Activated CD8-positive, alpha-beta T cell treated with anti-CD3 and anti-CD28 coated beads for 36 hours (primary cell): ENCODE measurements at regions of chr12 and their contacts with region 1.

Region 1: DNA sequence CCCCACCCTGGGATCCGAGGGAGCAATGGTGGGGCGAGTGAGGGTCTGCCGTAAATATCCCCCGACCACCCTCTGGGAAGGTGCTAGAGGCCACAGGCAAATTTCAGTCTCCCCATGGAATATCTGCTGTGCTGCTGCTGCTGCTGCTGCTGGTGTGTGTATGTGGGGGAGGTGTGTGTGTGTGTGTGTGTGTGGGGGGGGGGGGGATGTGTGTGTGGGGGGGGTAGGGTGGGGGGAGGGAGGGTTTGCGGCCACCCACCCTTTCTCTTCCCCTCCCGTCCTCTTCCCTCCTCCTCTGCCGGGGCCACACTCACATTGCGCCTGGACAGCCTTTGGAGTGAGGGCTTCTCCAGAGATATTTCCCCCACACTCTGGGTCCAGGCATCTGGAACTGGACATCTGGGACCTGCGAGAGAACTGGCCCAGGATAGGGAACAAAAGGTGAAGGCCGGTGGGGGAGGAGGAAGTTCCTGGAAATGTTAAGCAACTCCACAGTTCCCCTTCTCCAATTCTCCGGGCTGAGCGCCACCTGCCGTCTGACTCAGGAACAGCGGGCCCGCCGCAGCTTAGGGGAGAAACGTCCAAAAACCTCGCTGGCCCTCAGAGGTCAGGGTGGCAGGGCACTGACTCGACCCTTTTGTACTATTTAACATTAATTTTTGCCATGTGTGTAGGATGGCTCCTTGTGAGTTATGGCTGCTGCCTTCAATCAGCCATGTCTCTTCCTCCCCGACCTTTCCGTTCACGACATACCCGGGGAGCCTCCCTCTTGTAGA is at the start of gene C1RL:
- DNase-seq: peak; percentile 87
- ATAC-seq: peak; percentile 47
- H3K4me3 Mint-ChIP-seq: peak within 1 kb of the TSS; percentile 88
- H3K27ac Mint-ChIP-seq: peak within 1 kb of the TSS; percentile 93
- H3K4me1 Mint-ChIP-seq: peaks cover 36% of the 10 kb centered on the region
- H3K27me3 Mint-ChIP-seq: no peaks in the 10 kb centered on the region
- CTCF ChIP-seq: peak; percentile 97
- total RNA-seq, gene C1RL: 10.5 to 11.8 TPM

Region 2: DNA sequence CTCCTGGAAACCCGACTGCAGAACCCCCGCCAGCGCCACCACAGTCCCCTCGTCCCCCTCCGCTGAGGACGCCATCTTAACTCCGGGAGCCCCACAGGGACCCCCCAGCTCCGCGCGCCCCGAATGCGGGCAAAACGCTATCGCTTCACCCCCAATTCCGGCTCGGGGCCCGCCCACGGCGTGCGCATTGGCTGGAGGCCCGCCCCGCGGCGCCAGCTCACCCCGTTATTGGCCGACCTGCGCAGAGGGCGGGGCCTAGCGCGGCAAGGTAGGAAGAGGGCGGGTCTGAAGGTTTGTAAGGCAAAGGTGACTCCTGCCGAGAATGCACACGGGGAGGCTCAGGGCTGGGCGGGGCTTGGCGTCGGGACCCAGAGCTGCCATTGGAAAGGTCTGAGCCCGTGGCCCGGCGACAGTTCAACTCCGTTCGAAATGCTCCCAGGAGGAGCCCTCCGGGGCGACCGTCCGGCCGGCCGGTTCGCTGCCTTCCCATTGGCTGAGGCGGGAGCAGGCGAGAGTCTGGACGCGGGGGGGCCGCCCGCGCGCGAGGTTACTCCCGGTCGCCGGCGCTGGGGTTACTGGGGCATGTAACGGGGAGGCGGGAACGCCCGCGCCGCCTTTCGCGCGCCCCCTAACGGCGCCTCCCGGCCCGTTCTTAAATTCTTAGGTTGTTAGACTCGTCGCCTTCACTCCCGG is 90.5 kb before region 1 on chr12 and contains the start of gene LPCAT3:
- CTCF ChIA-PET with region 1: interaction called, 14 read pairs
- POLR2A ChIA-PET with region 1: interaction called, 7 read pairs
- intact Hi-C with region 1: no loop called
- DNase-seq: peak; percentile 98
- ATAC-seq: peak; percentile 97
- H3K4me3 Mint-ChIP-seq: peak within 1 kb of the TSS; percentile 96
- H3K27ac Mint-ChIP-seq: peak within 1 kb of the TSS; percentile 91
- H3K4me1 Mint-ChIP-seq: peaks cover 32% of the 10 kb centered on the region
- H3K27me3 Mint-ChIP-seq: no peaks in the 10 kb centered on the region
- CTCF ChIP-seq: peak; percentile 87
- total RNA-seq, gene LPCAT3: 17.3 to 18.1 TPM

Region 3: GRCh38 chr12:7042842-7043241 is 66.1 kb before region 1 on chr12:
- CTCF ChIA-PET with region 1: interaction called, 15 read pairs
- POLR2A ChIA-PET with region 1: no interaction called
- intact Hi-C with region 1: no loop called
- DNase-seq: no peak
- ATAC-seq: no peak
- H3K4me3 Mint-ChIP-seq: no peak overlapping the region
- H3K27ac Mint-ChIP-seq: no peak overlapping the region
- H3K4me1 Mint-ChIP-seq: peaks cover 6% of the 10 kb centered on the region
- H3K27me3 Mint-ChIP-seq: no peaks in the 10 kb centered on the region
- CTCF ChIP-seq: peak; percentile 48

Region 4: DNA sequence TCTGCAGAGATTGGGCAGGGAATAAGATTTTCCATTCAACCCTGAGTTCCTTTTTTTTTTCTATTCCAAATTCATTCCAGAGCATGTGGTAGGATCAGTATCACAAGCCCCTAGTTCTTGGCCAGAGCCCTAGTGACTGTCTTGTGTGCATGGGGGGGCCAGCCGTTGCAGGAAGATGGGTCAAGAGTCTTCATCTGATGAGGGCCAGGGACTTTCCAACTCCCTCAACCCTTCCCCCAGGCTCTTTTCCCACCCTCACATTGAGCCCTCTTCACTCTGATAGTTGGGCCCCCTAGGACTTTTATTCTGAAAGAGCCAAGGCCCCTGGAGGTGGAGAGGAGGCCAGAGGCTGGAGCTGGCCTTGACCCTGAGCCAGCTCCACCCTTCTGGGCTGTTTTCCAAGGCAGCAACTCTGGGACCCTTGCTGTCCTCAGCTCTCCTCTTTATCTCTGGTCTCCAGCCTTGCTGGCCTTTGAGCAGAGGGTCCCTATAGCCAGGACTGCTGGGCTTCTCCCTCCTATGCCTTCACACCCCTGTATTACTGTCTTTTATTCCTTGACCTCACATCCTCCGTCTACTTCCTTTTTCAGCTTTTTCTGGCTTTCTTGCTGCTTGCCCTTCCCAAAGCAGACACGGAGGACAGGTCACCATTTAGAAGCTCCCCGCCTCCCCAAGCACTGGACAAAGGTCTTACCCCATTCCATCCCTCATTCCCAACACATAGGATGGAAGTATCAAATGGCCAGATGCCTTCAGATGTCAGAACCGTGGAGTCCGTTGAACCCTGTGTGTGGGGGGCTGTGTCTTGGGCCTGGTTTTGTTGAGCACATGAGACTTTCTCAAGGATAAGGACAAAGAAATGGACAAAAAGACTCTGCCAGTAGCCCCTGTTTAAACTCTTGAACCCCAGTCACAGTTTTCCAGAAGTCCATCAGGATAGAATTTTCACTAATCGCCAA is 14.1 kb after region 1 on chr12:
- CTCF ChIA-PET with region 1: interaction called, 24 read pairs
- POLR2A ChIA-PET with region 1: interaction called, 8 read pairs
- intact Hi-C with region 1: no loop called
- DNase-seq: no peak
- ATAC-seq: no peak
- H3K4me3 Mint-ChIP-seq: no peak overlapping the region
- H3K27ac Mint-ChIP-seq: no peak overlapping the region
- H3K4me1 Mint-ChIP-seq: no peaks in the 10 kb centered on the region
- H3K27me3 Mint-ChIP-seq: no peaks in the 10 kb centered on the region
- CTCF ChIP-seq: no peak